ENCODE measurements at regions of chr9 and their contacts with region 1.

Region 1: GRCh38 chr9:21395778-21396717 is 10.8 kb upstream of the IFNA2 start:
- DNase-seq: peak in 1 of 2 experiments; percentile 42
- ATAC-seq: peak; percentile 74 to 86
- H3K4me3 ChIP-seq: peak overlapping the region; percentile 54
- H3K27ac ChIP-seq: peak overlapping the region in 1 of 2 experiments; percentile 47; a peak in 2 of 6 replicates
- H3K4me1 ChIP-seq: no peaks in the 10 kb centered on the region
- CTCF ChIP-seq: peak; percentile 93
- EP300 ChIP-seq: no peak
- POLR2A ChIP-seq: no peak
- RAD21 ChIP-seq: peak; percentile 39 to 71; a peak in 4 of 5 replicates

Region 2: DNA sequence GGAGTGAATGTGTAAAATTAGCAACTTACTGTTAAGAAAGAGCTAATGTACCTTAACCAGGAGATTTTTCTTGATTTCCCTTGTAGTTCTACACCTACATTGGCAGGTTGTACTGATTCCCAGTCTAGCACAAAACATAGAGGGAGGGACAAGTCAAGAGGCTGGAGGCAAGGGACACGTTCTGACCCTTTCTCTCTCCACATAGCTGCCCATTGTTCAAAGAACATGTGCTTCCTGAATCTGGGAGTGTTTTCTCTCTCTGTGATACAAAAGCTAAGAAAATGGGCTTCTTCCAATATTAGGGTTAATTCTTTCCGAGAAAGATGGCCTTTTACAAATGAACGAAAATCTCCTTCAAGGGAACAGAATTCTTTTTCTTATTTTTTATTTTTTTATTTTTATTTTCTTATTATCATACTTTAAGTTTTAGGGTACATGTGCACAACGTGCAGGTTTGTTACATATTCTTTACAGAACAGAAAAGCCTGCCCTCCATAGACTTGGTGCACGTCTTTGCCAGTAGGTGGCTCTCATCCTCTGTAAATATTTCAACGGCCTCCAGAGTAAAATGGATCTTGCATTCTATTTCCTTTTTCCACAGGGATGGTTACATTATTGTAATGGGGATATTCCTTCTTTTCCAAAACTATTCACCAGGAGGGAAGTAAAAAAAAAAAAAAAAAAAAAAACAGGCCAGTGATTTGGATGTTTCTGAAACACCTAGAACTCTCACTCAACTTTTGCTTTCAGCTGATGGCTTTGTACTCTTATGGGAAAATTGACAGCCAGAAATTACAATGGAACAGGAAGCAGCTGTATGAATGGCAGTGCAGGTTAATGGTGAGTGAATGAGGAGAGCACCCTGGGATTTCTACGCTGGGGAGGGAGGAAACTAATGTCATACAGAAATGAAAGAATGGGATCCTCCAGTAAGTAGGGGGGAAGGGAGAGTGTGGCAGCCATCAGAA is 77.8 kb before region 1 on chr9:
- CTCF ChIA-PET with region 1: interaction called, 38 read pairs
- POLR2A ChIA-PET with region 1: no interaction called
- DNase-seq: peak in 1 of 2 experiments; percentile 58
- ATAC-seq: peak; percentile 77 to 94
- H3K4me3 ChIP-seq: no peak overlapping the region
- H3K27ac ChIP-seq: no peak overlapping the region
- H3K4me1 ChIP-seq: no peaks in the 10 kb centered on the region
- CTCF ChIP-seq: peak; percentile 80
- EP300 ChIP-seq: no peak
- POLR2A ChIP-seq: no peak
- RAD21 ChIP-seq: peak; percentile 76

Region 3: GRCh38 chr9:21334701-21335632 is 61.1 kb before region 1 on chr9 and contains the start of gene KLHL9:
- CTCF ChIA-PET with region 1: interaction called, 65 read pairs
- POLR2A ChIA-PET with region 1: interaction called, 6 read pairs
- DNase-seq: peak; percentile 94 to 97
- ATAC-seq: peak; percentile 97 to 98
- H3K4me3 ChIP-seq: peak within 1 kb of the TSS; percentile 70
- H3K27ac ChIP-seq: peak within 1 kb of the TSS; percentile 95 to 99
- H3K4me1 ChIP-seq: peaks cover 36% of the 10 kb centered on the region
- CTCF ChIP-seq: no peak
- EP300 ChIP-seq: no peak
- POLR2A ChIP-seq: peak; percentile 71
- RAD21 ChIP-seq: no peak
- polyA plus RNA-seq, gene KLHL9: 25.3 and 27.4 TPM in 2 replicates

Region 4: DNA sequence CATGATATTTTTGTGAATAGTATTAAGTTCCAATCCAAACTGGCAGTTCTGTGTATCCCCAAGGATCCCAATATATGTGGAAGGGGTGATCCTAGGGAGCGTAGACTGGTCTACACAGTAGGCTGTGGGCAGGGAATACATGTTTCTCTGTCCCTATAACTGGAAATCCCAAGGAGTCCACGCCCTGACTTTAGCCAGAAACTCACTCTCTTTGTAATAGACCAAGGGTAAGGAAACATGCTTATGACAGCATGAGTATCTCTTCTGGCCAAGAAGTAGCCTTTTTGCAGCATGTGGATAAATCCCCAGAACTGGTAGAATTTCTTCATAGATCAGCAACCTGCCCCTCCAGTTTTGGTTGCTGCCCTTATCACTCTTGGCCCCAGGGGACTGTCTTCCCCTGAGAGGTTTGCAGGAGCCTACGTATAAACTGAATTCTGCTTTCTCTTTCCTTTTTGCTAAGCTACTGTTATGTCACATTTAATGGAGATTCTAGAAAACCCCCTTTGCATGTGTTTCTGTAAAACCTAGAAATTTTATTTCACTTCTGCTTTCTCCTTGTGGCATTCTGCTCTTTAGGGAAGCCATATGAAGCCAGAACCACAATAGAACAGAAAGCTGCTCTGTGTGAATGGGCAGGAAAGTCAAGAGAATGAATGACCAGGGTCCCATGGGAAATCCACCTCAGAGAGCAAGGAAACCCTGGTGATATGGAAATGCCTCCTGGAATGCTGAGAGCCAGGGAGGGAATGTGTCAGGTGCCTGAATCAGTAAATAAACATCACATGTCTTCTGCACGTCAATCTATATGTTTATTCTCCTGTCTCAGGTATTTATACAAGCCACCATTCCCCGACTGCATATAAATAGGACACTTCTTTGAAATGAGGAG is 14.4 kb before region 1 on chr9:
- CTCF ChIA-PET with region 1: interaction called, 14 read pairs
- POLR2A ChIA-PET with region 1: no interaction called
- DNase-seq: peak in 1 of 2 experiments; percentile 46
- ATAC-seq: peak; percentile 62 to 68
- H3K4me3 ChIP-seq: no peak overlapping the region
- H3K27ac ChIP-seq: no peak overlapping the region
- H3K4me1 ChIP-seq: peaks cover 7% of the 10 kb centered on the region; the same call in 1 of the 3 replicates
- CTCF ChIP-seq: no peak
- EP300 ChIP-seq: no peak
- POLR2A ChIP-seq: no peak
- RAD21 ChIP-seq: no peak